ENCODE measurements at regions of chr15 and their contacts with region 1.

Region 1: GRCh38 chr15:41401904-41402267 is 410 bp downstream of the NDUFAF1 start:
- DNase-seq: no peak
- ATAC-seq: peak; percentile 8
- H3K4me3 ChIP-seq: peak overlapping the region; percentile 76 to 97 (median 86)
- H3K4me3 Mint-ChIP-seq: peak overlapping the region; percentile 98
- H3K27ac ChIP-seq: peak overlapping the region; percentile 71 to 91
- H3K27ac Mint-ChIP-seq: peak overlapping the region; percentile 99
- H3K4me1 ChIP-seq: peaks cover 8 to 17% of the 10 kb centered on the region in 2 donors
- H3K4me1 Mint-ChIP-seq: peaks cover 21% of the 10 kb centered on the region
- H3K27me3 ChIP-seq: no peaks in the 10 kb centered on the region
- H3K27me3 Mint-ChIP-seq: no peaks in the 10 kb centered on the region
- CTCF ChIP-seq: no peak

Region 2: GRCh38 chr15:41331833-41332787 is 69.8 kb before region 1 on chr15 and contains the start of gene OIP5:
- CTCF ChIA-PET with region 1: no interaction called
- POLR2A ChIA-PET with region 1: no interaction called
- intact Hi-C with region 1: loop called (anchors 1 kb)
- DNase-seq: peak; percentile 98
- ATAC-seq: peak; percentile 94
- H3K4me3 ChIP-seq: peak within 1 kb of the TSS; percentile 84 to 98 (median 89)
- H3K4me3 Mint-ChIP-seq: peak within 1 kb of the TSS; percentile 99
- H3K27ac ChIP-seq: peak within 1 kb of the TSS; percentile 45 to 76
- H3K27ac Mint-ChIP-seq: peak within 1 kb of the TSS; percentile 95
- H3K4me1 ChIP-seq: peaks cover 13 to 19% of the 10 kb centered on the region in 2 donors
- H3K4me1 Mint-ChIP-seq: peaks cover 27% of the 10 kb centered on the region
- H3K27me3 ChIP-seq: no peaks in the 10 kb centered on the region
- H3K27me3 Mint-ChIP-seq: no peaks in the 10 kb centered on the region
- CTCF ChIP-seq: peak; percentile 57
- total RNA-seq, gene OIP5: 0.84 and 2.3 TPM in 2 replicates

Region 3: GRCh38 chr15:41544650-41545015 is 142.7 kb after region 1 on chr15:
- CTCF ChIA-PET with region 1: no interaction called
- POLR2A ChIA-PET with region 1: no interaction called
- intact Hi-C with region 1: loop called (anchors 5 kb)
- DNase-seq: no peak
- ATAC-seq: no peak
- H3K4me3 ChIP-seq: peak overlapping the region in 4 of 5 experiments; percentile 69 to 92 (median 84)
- H3K4me3 Mint-ChIP-seq: peak overlapping the region; percentile 97
- H3K27ac ChIP-seq: no peak overlapping the region
- H3K27ac Mint-ChIP-seq: peak overlapping the region; percentile 42
- H3K4me1 ChIP-seq: peaks cover 6 to 11% of the 10 kb centered on the region in 2 donors
- H3K4me1 Mint-ChIP-seq: peaks cover 10% of the 10 kb centered on the region
- H3K27me3 ChIP-seq: no peaks in the 10 kb centered on the region
- H3K27me3 Mint-ChIP-seq: no peaks in the 10 kb centered on the region
- CTCF ChIP-seq: no peak